ENCODE measurements at regions of chr19 and their contacts with region 1.

Region 1: GRCh38 chr19:42764836-42765235 is 642 bp downstream of the PSG8 start:
- DNase-seq: no peak
- ATAC-seq: no peak
- H3K4me3 Mint-ChIP-seq: no peak overlapping the region
- H3K27ac Mint-ChIP-seq: no peak overlapping the region
- H3K4me1 Mint-ChIP-seq: no peaks in the 10 kb centered on the region
- H3K27me3 Mint-ChIP-seq: peaks cover 11% of the 10 kb centered on the region

Region 2: GRCh38 chr19:42634409-42635232 is 130.2 kb before region 1 on chr19:
- CTCF ChIA-PET with region 1: no interaction called
- POLR2A ChIA-PET with region 1: no interaction called
- intact Hi-C with region 1: loop called (anchors 10 kb)
- DNase-seq: peak; percentile 72
- ATAC-seq: peak; percentile 55
- H3K4me3 Mint-ChIP-seq: no peak overlapping the region
- H3K27ac Mint-ChIP-seq: no peak overlapping the region
- H3K4me1 Mint-ChIP-seq: no peaks in the 10 kb centered on the region
- H3K27me3 Mint-ChIP-seq: peaks cover 13% of the 10 kb centered on the region

Region 3: GRCh38 chr19:42683917-42684513 is 80.8 kb before region 1 on chr19:
- CTCF ChIA-PET with region 1: interaction called, 3 read pairs
- POLR2A ChIA-PET with region 1: no interaction called
- intact Hi-C with region 1: loop called in 1 of 2 experiments (anchors 10 kb)
- DNase-seq: peak; percentile 45
- ATAC-seq: no peak
- H3K4me3 Mint-ChIP-seq: no peak overlapping the region
- H3K27ac Mint-ChIP-seq: no peak overlapping the region
- H3K4me1 Mint-ChIP-seq: no peaks in the 10 kb centered on the region
- H3K27me3 Mint-ChIP-seq: peaks cover 6% of the 10 kb centered on the region

Region 4: GRCh38 chr19:43148233-43148632 is 383.4 kb after region 1 on chr19:
- CTCF ChIA-PET with region 1: no interaction called
- POLR2A ChIA-PET with region 1: no interaction called
- intact Hi-C with region 1: no loop called
- DNase-seq: no peak
- ATAC-seq: no peak
- H3K4me3 Mint-ChIP-seq: no peak overlapping the region
- H3K27ac Mint-ChIP-seq: no peak overlapping the region
- H3K4me1 Mint-ChIP-seq: no peaks in the 10 kb centered on the region
- H3K27me3 Mint-ChIP-seq: peaks cover 2% of the 10 kb centered on the region

Measured in activated CD4-positive, alpha-beta T cell treated with anti-CD3 and anti-CD28 coated beads for 36 hours (primary cell).